Right ventricle myocardium inferior (tissue), 1 donor: ENCODE measurements at regions of chr1 and their contacts with region 1.

Region 1: DNA sequence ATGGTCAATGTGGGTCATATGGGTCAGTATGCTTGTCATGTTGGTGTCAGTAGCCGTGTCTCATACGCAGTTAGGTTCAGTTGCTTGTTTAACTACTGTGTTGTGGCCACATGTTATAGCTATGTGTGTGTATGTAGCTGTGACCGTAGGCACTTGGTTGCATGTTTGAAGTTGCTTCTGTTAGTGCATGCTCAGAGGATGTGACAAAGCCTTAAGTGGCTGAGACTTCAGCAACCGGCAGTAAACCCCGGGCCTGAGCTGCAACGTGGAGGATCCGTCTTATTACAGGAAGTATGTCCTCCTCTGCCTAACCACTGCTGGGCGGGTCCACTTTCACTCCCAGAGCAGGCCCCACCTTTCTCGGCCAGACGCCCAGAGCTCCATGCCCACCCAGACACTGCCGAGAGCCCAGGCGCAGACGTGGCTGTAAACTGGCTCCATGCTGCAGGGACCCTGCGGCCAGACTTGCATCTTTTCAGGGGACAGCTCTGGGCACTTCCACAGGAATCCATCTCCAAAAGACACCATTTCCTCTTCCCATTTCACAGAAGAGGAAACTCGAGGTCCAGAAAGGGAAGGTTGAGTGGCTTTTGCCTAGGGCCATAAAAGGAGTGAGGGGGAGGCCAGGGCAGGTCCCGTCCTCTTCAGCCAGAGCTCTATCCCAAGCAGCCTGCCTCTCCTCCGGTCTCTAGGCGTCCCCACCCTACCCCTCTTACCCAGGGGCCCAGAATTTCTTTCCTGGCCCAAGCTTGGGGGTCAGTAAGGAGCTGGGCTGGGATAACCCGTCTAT is 2.1 kb downstream of the TCEA3 start:
- DNase-seq: peak; percentile 86
- ATAC-seq: peak; percentile 44

Region 2: DNA sequence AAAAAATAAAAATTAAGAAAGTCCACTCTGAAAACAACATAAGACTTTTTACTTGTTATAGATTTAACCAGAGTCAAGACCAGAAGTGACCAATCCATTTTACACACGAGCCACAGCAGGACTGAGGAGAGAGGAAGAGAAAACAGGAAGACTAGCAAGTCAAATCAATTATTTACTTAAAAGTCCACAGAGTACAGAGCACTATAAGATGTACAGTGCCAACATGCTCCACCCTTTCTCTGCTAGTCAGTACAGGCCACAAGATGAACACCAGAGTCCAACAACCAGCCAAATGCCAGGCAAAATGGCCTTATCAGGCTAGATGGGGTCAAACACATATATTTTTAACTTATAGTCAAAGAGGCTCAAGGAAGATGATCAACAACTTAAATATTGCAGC is 273.3 kb before region 1 on chr1:
- intact Hi-C with region 1: no loop called
- DNase-seq: no peak
- ATAC-seq: no peak

Region 3: DNA sequence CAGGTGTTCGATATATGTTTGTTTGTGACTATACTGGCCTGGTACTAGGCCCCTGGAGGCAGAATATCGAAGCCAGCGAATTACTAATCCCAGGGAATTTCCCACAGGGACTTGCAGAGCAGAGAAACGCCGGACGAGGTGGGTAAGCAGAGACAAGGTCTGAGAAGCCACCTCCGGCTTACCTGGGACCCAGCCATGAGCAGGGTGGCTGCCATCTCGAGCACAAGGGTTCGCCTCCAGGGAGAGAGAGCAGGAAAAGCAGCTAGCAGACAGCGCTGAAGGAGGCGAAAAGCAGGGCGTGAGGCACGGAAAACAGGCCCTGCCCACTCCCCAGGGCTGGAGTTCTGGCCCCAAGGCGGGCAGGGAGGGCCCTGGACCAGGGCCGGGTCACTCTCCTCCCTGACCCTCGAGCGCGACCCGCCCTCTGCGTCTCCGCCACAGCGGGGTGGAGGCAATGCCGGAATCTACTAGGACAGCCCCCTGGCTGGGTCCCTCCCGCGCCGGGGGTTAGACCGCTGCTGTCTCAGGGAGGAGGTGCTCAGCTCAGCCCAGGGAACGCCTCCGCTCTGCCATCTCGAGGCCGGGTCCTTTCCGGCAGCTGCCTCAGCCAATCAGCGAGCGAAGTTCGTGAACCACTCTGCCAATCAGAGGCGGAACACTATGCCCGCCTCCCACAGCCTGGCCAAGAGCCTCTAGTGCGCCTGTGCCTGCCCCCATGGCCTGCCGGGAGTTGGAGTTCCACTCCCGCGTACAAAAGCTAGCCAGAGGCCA is 54.5 kb before region 1 on chr1:
- intact Hi-C with region 1: no loop called
- DNase-seq: peak; percentile 99
- ATAC-seq: peak; percentile 92

Region 4: GRCh38 chr1:23403735-23404486 is 18.5 kb before region 1 on chr1:
- intact Hi-C with region 1: loop called (anchors 2 kb)
- DNase-seq: peak; percentile 89
- ATAC-seq: peak; percentile 84

Region 5: DNA sequence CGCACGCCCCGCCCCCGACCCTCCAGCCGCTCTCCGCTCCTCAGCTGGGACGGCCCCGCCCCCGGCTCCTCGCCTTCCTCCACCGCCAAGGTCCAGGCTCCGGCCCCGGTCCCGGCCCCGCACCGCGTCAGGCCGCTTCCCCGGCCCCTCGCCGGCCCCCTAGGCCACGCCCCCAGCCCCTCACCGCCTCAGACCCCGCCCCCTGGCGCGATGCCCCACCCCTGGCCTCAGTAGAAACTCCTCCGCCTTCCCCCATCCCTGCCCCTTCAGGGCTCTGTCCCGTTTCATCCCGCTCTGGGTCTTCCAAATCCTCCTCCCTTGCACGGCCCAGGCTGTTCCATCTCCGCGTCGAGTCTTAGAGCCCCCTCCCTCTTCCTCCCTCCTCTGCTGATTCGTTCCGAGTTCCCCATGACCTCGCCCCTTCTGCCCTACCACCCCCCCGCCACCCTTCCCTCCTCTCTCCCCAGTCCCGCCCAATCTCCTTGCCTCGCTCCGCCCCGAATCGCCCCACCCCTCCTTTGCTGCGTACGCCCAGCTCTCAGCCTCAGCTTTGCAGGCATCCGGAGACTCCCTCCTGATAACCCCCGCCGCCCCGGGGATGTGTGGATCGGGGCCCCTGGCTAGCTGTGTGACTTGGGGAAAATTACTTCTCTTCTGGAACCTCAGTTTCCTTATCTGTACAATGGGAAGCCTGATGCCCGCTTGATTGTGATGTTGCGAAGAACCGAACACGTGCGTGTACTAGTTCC is 62.0 kb after region 1 on chr1:
- intact Hi-C with region 1: loop called (anchors 5 kb)
- DNase-seq: peak; percentile 96
- ATAC-seq: peak; percentile 95